Activated CD4-positive, alpha-beta memory T cell treated with anti-CD3 and anti-CD28 coated beads for 36 hours (primary cell): ENCODE measurements at regions of chr11 and their contacts with region 1.

Region 1: GRCh38 chr11:33736148-33736809 is at the start of gene CD59:
- DNase-seq: peak; percentile 94
- H3K4me3 Mint-ChIP-seq: peak within 1 kb of the TSS; percentile 82
- H3K27ac Mint-ChIP-seq: peak within 1 kb of the TSS; percentile 70
- H3K4me1 Mint-ChIP-seq: peaks cover 48% of the 10 kb centered on the region
- H3K27me3 Mint-ChIP-seq: no peaks in the 10 kb centered on the region
- total RNA-seq, gene CD59: 79.4 TPM

Region 2: DNA sequence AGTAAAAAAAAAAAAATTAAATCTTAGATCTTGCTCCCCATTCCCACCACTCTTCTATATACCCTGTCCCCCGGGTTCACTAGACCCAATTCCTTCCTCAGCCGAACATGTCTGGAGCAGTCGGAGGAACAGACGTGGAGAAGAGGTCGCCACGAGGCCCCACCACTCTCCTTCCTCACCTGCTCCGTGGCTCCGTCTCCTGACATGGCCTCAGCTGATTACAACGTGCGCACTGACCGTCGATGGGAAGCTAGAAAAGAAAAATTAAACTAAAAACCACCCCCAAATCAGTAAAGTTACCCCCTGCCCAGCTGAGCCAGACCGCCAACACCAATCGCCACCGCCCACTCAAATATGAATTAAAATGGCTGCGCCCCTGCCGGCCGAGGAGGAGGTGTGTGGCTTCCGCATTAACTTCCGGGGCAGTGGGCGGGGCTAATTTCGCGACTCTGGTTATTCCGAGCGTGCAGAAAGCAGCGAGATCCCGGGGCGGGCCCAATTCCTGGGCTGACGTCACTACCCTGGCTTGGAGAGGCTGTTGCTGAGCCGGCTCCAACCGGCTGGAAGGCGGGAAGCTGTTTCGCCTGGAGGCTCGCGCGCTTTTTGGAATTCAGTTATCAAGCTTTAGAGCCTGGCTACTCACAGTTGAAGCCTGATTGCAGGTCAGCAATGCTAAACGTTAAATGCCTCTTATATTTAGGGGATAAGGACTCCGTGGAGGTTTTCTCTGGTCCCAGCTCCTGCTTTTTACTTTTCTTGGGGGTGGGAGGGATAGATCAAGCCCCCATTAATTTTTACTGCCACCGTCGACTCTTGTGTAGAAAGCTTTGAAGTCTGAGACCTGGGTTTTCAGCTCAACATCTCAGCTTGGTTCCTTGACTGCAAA is 574.9 kb before region 1 on chr11 and contains the start of gene CSTF3:
- CTCF ChIA-PET with region 1: no interaction called
- POLR2A ChIA-PET with region 1: no interaction called
- intact Hi-C with region 1: loop called (anchors 10 kb)
- DNase-seq: peak; percentile 99
- H3K4me3 Mint-ChIP-seq: peak within 1 kb of the TSS; percentile 99
- H3K27ac Mint-ChIP-seq: peak within 1 kb of the TSS; percentile 95
- H3K4me1 Mint-ChIP-seq: peaks cover 40% of the 10 kb centered on the region
- H3K27me3 Mint-ChIP-seq: no peaks in the 10 kb centered on the region
- total RNA-seq, gene CSTF3: 31.7 to 33.7 TPM

Region 3: GRCh38 chr11:33227578-33228262 is 508.6 kb before region 1 on chr11:
- CTCF ChIA-PET with region 1: no interaction called
- POLR2A ChIA-PET with region 1: no interaction called
- intact Hi-C with region 1: no loop called
- DNase-seq: no peak
- H3K4me3 Mint-ChIP-seq: no peak overlapping the region
- H3K27ac Mint-ChIP-seq: no peak overlapping the region
- H3K4me1 Mint-ChIP-seq: no peaks in the 10 kb centered on the region
- H3K27me3 Mint-ChIP-seq: no peaks in the 10 kb centered on the region

Region 4: GRCh38 chr11:33700425-33701271 is 35.6 kb before region 1 on chr11 and contains the start of gene C11orf91:
- CTCF ChIA-PET with region 1: interaction called, 3 read pairs
- POLR2A ChIA-PET with region 1: interaction called, 4 read pairs
- intact Hi-C with region 1: loop called (anchors 1 kb)
- DNase-seq: peak; percentile 96
- H3K4me3 Mint-ChIP-seq: peak within 1 kb of the TSS; percentile 83
- H3K27ac Mint-ChIP-seq: peak within 1 kb of the TSS; percentile 39
- H3K4me1 Mint-ChIP-seq: peaks cover 11% of the 10 kb centered on the region
- H3K27me3 Mint-ChIP-seq: peaks cover 14% of the 10 kb centered on the region
- total RNA-seq, gene C11orf91: not detected

Region 5: DNA sequence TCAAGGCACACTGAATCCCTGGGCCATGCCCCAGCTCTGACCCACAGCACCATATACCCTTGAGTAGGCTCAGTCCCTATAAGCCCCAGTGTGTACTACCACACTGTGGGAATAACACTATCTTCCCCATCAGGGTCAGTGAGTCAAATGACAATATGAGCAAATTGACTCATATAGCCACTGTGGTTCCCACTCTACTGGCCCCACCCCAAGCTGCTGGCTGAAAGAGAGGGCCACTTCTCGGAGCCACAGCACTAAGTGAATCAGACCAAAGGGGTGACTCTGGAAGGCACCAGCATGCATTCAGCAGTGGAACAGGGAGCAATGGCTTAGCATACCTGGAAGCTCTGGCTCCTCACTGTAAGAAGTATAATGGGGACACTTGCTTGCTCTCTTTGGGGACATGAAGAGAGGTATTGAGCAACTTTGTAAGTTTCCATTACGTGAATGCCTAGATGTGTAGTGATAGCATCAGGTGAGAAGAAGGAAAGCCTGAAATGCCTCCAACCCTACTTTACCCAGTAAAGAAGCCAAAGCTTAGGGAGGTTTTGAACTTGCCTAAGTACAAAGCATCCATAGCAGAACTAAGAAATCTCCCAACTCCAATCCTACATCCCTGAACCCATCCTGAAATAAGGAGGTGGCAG is 13.6 kb before region 1 on chr11:
- CTCF ChIA-PET with region 1: interaction called, 5 read pairs
- POLR2A ChIA-PET with region 1: interaction called, 13 read pairs
- intact Hi-C with region 1: loop called (anchors 1 kb)
- DNase-seq: peak; percentile 82
- H3K4me3 Mint-ChIP-seq: no peak overlapping the region
- H3K27ac Mint-ChIP-seq: peak overlapping the region; percentile 81
- H3K4me1 Mint-ChIP-seq: peaks cover 46% of the 10 kb centered on the region
- H3K27me3 Mint-ChIP-seq: no peaks in the 10 kb centered on the region

Region 6: GRCh38 chr11:33773987-33774735 is 37.9 kb after region 1 on chr11 and contains the start of gene FBXO3:
- CTCF ChIA-PET with region 1: interaction called, 3 read pairs
- POLR2A ChIA-PET with region 1: interaction called, 3 read pairs
- intact Hi-C with region 1: loop called (anchors 2 kb)
- DNase-seq: peak; percentile 84
- H3K4me3 Mint-ChIP-seq: peak within 1 kb of the TSS; percentile 95
- H3K27ac Mint-ChIP-seq: peak within 1 kb of the TSS; percentile 89
- H3K4me1 Mint-ChIP-seq: peaks cover 48% of the 10 kb centered on the region
- H3K27me3 Mint-ChIP-seq: peaks cover 8% of the 10 kb centered on the region
- total RNA-seq, gene FBXO3: 16.5 to 17.7 TPM